GM12878 (cell line): ENCODE measurements at regions of chr2 and their contacts with region 1.

Region 1: DNA sequence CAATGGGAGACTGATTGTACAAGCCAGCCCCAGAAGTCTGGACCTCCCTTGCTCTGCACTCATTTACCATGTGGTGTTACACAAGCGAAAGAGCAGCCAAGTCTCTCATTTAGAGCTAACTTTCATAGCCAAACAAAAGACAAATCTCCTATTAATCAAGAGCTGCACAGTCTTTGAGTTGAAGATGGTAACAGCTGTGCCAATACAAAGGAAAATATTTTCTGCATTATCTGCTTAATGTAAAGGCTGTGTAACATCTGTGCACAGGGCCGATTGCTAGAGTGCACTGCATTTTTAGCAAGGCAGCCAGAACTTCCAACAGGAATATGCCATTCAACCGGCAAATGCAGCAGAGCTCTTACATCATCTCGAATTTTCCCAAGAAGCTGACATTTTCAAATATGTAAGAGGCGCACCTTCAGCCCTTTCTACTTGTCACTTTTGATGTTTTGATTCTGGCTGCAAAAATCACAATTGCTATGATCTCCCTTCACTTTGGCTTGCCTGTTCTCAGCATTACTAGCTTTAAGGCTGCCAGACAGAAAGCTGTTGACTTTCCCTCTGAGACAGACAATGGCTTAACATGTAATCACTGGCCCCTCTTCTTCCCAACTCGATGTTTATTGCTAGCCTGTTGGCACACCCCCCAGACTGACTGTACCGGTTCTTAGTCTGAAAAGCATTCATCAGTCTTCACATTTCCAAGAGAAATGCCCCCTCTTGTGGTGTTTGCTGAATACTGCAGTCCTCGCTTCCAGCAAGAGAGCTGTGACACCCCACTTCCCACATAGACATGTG is 96.9 kb upstream of the TANK start:
- DNase-seq: peak; percentile 51
- ATAC-seq: peak; percentile 96
- H3K4me3 ChIP-seq: no peak overlapping the region
- H3K27ac ChIP-seq: no peak overlapping the region
- H3K4me1 ChIP-seq: no peaks in the 10 kb centered on the region; the same call in 1 of the 2 replicates
- H3K27me3 ChIP-seq: no peaks in the 10 kb centered on the region
- CTCF ChIP-seq: peak; percentile 88 to 91 (median 89)
- EP300 ChIP-seq: no peak
- POLR2A ChIP-seq: no peak
- RAD21 ChIP-seq: peak; percentile 84

Region 2: GRCh38 chr2:160429248-160430000 is 633.9 kb before region 1 on chr2:
- CTCF ChIA-PET with region 1: interaction called, 35 read pairs
- POLR2A ChIA-PET with region 1: no interaction called
- RAD21 ChIA-PET with region 1: interaction called, 5 read pairs
- SMC1A ChIA-PET with region 1: interaction called, 3 read pairs
- in situ Hi-C with region 1: no loop called
- intact Hi-C with region 1: no loop called
- DNase-seq: no peak
- ATAC-seq: peak; percentile 71
- H3K4me3 ChIP-seq: no peak overlapping the region
- H3K27ac ChIP-seq: no peak overlapping the region
- H3K4me1 ChIP-seq: no peaks in the 10 kb centered on the region; the same call in 1 of the 2 replicates
- H3K27me3 ChIP-seq: no peaks in the 10 kb centered on the region
- CTCF ChIP-seq: peak; percentile 31 to 47 (median 41); a peak in 5 of 6 replicates
- EP300 ChIP-seq: no peak
- POLR2A ChIP-seq: no peak
- RAD21 ChIP-seq: no peak

Region 3: GRCh38 chr2:161004379-161004778 is 59.0 kb before region 1 on chr2:
- CTCF ChIA-PET with region 1: interaction called, 14 read pairs
- POLR2A ChIA-PET with region 1: no interaction called
- RAD21 ChIA-PET with region 1: interaction called, 4 read pairs
- SMC1A ChIA-PET with region 1: interaction called, 20 read pairs
- in situ Hi-C with region 1: no loop called
- intact Hi-C with region 1: no loop called
- DNase-seq: no peak
- ATAC-seq: no peak; the same call in 2 of the 3 replicates
- H3K4me3 ChIP-seq: no peak overlapping the region
- H3K27ac ChIP-seq: no peak overlapping the region
- H3K4me1 ChIP-seq: no peaks in the 10 kb centered on the region
- H3K27me3 ChIP-seq: no peaks in the 10 kb centered on the region
- CTCF ChIP-seq: peak in 2 of 3 experiments; percentile 18 to 19; a peak in 3 of 6 replicates
- EP300 ChIP-seq: no peak
- POLR2A ChIP-seq: no peak
- RAD21 ChIP-seq: 0 out of 2 replicates have a peak, but pooled peaks have one; percentile 7

Region 4: DNA sequence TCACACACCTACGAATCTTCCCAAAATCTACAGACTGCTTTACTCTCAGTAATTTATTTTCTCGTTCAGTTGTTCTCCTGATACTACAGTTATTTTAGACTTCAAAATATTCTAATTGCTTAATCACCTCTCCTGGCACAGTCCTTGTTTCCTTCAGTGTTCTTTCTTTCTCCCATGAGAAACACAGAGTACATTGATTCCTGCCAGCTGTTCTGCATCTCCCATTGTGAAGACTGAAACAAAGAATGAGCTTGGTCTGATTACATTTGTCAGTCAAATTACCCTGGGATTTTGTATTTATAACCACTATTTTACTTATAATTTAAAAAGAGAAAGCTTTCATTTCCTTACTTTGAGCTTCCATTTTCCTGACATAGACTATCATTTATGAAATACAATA is 33.0 kb after region 1 on chr2:
- CTCF ChIA-PET with region 1: interaction called, 47 read pairs
- POLR2A ChIA-PET with region 1: no interaction called
- RAD21 ChIA-PET with region 1: interaction called, 10 read pairs
- SMC1A ChIA-PET with region 1: interaction called, 8 read pairs
- in situ Hi-C with region 1: no loop called
- intact Hi-C with region 1: no loop called
- DNase-seq: no peak
- ATAC-seq: no peak; the same call in 2 of the 3 replicates
- H3K4me3 ChIP-seq: no peak overlapping the region
- H3K27ac ChIP-seq: no peak overlapping the region
- H3K4me1 ChIP-seq: peaks cover 6% of the 10 kb centered on the region
- H3K27me3 ChIP-seq: no peaks in the 10 kb centered on the region
- CTCF ChIP-seq: no peak
- EP300 ChIP-seq: no peak
- POLR2A ChIP-seq: no peak
- RAD21 ChIP-seq: no peak

Region 5: DNA sequence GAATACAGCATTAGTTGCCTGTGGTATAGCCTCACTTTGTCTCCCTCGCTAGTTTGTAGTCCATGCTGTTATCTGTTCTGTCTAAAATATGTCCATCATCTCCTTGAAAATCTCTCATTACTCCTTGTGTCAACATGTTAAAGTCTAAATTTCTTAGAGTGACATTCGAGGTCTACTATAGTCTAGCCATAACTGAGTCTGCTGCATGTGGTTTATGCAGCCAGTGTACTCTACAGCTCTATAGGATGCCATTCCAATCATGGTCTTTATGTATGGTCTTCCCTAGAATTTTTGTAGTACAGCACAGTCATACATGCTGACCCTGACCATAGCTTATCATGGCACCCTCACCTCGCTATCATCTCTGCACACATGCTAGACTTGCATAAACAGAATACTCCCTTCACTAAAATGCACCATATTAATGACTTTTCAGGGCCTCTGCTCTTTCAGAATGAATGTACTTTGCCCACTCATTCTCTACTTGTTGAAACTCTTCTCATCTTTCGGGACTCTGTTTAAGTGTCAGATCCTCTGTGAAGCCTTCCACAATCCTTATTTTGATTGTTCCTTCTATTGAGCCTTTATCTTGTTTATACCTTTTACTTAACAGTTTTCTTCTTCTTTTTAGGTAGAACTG is 109.7 kb after region 1 on chr2:
- CTCF ChIA-PET with region 1: interaction called, 7 read pairs
- POLR2A ChIA-PET with region 1: no interaction called
- RAD21 ChIA-PET with region 1: interaction called, 11 read pairs
- SMC1A ChIA-PET with region 1: interaction called, 6 read pairs
- in situ Hi-C with region 1: no loop called
- intact Hi-C with region 1: no loop called
- DNase-seq: no peak
- ATAC-seq: peak; percentile 70
- H3K4me3 ChIP-seq: peak overlapping the region; percentile 36; the same call in 1 of the 2 replicates
- H3K27ac ChIP-seq: peak overlapping the region; percentile 36
- H3K4me1 ChIP-seq: peaks cover 52% of the 10 kb centered on the region
- H3K27me3 ChIP-seq: no peaks in the 10 kb centered on the region
- CTCF ChIP-seq: no peak
- EP300 ChIP-seq: peak; percentile 8 to 35; a peak in 2 of 4 replicates
- POLR2A ChIP-seq: no peak
- RAD21 ChIP-seq: no peak

Region 6: DNA sequence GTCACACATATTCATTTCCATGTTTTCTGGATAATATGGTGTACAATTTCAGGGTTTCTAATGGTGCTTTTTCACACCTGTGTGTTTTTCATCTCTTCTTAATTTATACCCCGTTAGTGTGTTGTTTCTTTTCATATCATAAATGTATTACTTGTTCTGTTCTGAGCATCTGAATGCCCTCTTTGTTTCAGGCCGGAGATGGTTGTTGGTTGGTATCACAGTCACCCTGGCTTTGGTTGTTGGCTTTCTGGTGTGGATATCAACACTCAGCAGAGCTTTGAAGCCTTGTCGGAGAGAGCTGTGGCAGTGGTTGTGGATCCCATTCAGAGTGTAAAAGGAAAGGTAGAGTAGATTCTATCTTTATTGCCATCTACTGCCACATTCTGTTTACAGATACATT is 307.6 kb after region 1 on chr2:
- CTCF ChIA-PET with region 1: no interaction called
- POLR2A ChIA-PET with region 1: no interaction called
- RAD21 ChIA-PET with region 1: no interaction called
- SMC1A ChIA-PET with region 1: no interaction called
- in situ Hi-C with region 1: no loop called
- intact Hi-C with region 1: no loop called
- DNase-seq: no peak
- ATAC-seq: no peak
- H3K4me3 ChIP-seq: no peak overlapping the region
- H3K27ac ChIP-seq: no peak overlapping the region
- H3K4me1 ChIP-seq: no peaks in the 10 kb centered on the region
- H3K27me3 ChIP-seq: no peaks in the 10 kb centered on the region
- CTCF ChIP-seq: no peak
- EP300 ChIP-seq: no peak
- POLR2A ChIP-seq: no peak
- RAD21 ChIP-seq: no peak

Region 7: DNA sequence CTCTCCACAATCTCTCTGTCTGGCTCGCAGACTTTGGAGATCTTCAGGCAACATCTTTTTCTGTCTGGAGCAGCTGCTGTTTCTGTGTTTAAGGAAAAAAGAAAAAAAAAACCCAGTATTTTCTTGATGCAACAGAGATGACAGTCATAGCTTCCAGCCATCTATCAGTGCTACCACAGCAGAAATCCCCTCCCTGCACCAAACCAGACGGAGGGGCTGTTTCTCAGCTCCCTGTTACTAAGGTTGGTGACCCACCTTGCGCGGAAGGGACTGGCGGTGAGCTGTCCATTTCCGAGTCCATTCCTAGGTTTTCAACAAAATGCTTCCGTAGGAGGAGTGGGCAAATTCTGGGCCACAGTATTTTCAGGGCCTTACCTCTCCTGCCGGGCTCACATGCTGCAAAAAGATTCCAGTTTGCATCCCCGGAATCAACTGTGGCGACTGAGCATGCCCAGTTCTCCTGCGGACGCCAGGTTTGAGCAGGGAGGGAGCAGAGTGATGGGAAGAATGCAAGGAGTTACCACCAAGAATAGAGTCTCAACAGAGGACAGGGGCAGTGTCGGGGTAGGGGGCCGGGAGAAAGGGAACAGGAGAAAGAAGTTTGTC is 562.1 kb after region 1 on chr2:
- CTCF ChIA-PET with region 1: no interaction called
- POLR2A ChIA-PET with region 1: no interaction called
- RAD21 ChIA-PET with region 1: no interaction called
- SMC1A ChIA-PET with region 1: no interaction called
- in situ Hi-C with region 1: no loop called
- intact Hi-C with region 1: no loop called
- DNase-seq: no peak
- ATAC-seq: no peak
- H3K4me3 ChIP-seq: no peak overlapping the region
- H3K27ac ChIP-seq: no peak overlapping the region
- H3K4me1 ChIP-seq: no peaks in the 10 kb centered on the region
- H3K27me3 ChIP-seq: peaks cover 0 to 3% of the 10 kb centered on the region in 2 experiments; a peak in 2 of 4 replicates
- CTCF ChIP-seq: no peak
- EP300 ChIP-seq: no peak
- POLR2A ChIP-seq: no peak
- RAD21 ChIP-seq: no peak